Panc1 (cell line): ENCODE measurements at regions of chr14 and their contacts with region 1.

Region 1: DNA sequence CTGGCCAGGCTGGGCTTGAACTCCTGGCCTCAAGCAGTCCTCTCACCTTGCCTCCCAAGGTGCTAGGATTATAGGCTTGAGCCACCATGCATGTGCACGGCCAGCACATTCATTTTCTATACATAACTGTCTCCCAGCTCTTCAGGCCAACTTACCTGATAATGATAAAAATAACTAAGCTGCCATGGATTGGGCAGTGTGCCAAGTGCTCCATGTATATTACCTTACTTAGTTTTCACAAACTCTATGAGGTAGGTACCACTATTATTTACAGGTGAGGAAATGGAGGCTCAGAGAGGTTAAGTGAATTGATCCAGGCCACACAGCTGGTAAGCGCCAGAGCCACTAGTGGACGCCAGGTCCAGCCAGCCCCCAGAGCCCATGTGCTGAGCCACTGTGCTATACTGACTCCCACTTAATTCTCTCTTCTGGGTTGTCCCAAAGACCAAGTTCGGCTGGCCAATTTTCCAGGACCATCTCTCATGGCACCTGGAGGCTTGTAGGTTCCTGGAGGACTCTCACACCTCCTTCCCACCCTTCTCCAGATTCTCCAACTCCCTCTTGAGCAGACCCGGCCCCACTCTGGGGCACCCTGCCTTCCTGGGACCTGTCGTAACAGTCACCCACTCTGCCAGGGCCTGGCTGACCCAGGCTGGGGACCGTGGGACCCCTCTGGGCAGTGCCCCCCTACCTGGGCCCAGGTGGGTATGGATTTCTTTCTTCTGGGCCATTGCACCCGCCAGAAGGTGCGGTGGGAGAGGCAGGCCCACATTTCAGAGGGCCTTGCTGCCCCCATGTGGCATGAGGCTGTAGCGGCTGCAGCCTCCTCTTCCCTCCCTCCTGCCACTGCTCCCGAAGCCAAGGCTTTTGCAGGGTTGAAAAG is 30.2 kb upstream of the CIPC start:
- DNase-seq: peak; percentile 22
- ATAC-seq: peak; percentile 91
- H3K4me3 ChIP-seq: no peak overlapping the region
- H3K27ac ChIP-seq: peak overlapping the region; percentile 91
- H3K4me1 ChIP-seq: peaks cover 47% of the 10 kb centered on the region
- H3K27me3 ChIP-seq: no peaks in the 10 kb centered on the region
- CTCF ChIP-seq: peak; percentile 87

Region 2: GRCh38 chr14:76710056-76711010 is 357.5 kb before region 1 on chr14:
- CTCF ChIA-PET with region 1: interaction called, 10 read pairs
- POLR2A ChIA-PET with region 1: no interaction called
- in situ Hi-C with region 1: no loop called
- intact Hi-C with region 1: no loop called
- DNase-seq: no peak
- ATAC-seq: peak; percentile 78
- H3K4me3 ChIP-seq: no peak overlapping the region
- H3K27ac ChIP-seq: no peak overlapping the region
- H3K4me1 ChIP-seq: no peaks in the 10 kb centered on the region
- H3K27me3 ChIP-seq: no peaks in the 10 kb centered on the region
- CTCF ChIP-seq: peak; percentile 80

Region 3: GRCh38 chr14:76918751-76919543 is 148.9 kb before region 1 on chr14:
- CTCF ChIA-PET with region 1: interaction called, 11 read pairs
- POLR2A ChIA-PET with region 1: no interaction called
- in situ Hi-C with region 1: no loop called
- intact Hi-C with region 1: no loop called
- DNase-seq: peak; percentile 74
- ATAC-seq: peak; percentile 85
- H3K4me3 ChIP-seq: 0 out of 4 replicates have a peak overlapping the region, but pooled peaks of 1 of the 2 experiments have one; percentile 8
- H3K27ac ChIP-seq: peak overlapping the region; percentile 99
- H3K4me1 ChIP-seq: peaks cover 72% of the 10 kb centered on the region
- H3K27me3 ChIP-seq: no peaks in the 10 kb centered on the region
- CTCF ChIP-seq: no peak

Region 4: DNA sequence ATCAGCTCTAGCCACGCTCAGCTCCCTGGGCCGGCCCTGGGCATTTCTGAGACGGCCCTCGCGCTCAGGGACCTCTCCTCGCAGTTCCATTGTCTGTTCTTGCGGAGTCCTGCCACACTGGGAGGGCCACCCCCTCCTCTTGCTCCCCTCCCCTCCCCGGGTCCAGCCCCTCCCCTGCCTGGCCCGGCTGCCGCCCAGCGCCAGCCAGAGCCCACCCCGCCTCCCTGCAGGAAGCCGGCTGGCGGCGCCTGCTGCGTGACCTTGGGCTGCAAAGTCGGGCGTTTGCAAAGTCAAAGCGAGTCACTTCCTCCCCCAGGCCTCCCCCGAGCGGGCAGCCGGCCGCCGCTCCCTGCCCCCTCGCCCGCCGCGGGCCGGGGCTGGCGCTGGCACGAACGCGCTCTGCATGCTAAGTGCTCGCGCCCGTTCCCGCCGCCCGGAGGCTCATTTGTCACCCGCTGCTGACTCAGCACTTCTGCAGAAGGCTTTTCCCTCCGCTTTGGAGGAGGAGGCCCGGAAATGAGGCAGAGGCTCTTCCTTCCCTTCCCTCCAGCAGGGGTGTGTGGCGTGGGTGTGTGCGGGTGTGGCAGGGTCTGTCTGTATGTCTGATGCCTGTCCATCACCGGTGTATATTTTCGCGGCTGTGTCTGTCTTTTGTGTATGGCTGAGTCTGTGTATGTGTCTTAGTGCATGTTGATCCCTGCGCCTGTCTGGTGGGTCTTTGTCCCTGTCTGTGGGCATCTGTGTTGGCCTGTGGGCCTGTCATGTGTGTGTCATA is 111.4 kb before region 1 on chr14:
- CTCF ChIA-PET with region 1: no interaction called
- POLR2A ChIA-PET with region 1: no interaction called
- in situ Hi-C with region 1: no loop called
- intact Hi-C with region 1: loop called (anchors 5 kb)
- DNase-seq: no peak
- ATAC-seq: peak; percentile 74
- H3K4me3 ChIP-seq: peak overlapping the region; percentile 5 to 29; a peak in 3 of 4 replicates
- H3K27ac ChIP-seq: peak overlapping the region; percentile 98
- H3K4me1 ChIP-seq: peaks cover 70% of the 10 kb centered on the region
- H3K27me3 ChIP-seq: no peaks in the 10 kb centered on the region
- CTCF ChIP-seq: no peak

Region 5: GRCh38 chr14:77028384-77029231 is 39.3 kb before region 1 on chr14 and contains the start of gene IRF2BPL:
- CTCF ChIA-PET with region 1: interaction called, 10 read pairs
- POLR2A ChIA-PET with region 1: no interaction called
- in situ Hi-C with region 1: no loop called
- intact Hi-C with region 1: loop called (anchors 2 kb)
- DNase-seq: no peak
- ATAC-seq: peak; percentile 71
- H3K4me3 ChIP-seq: peak within 1 kb of the TSS; percentile 58 to 78
- H3K27ac ChIP-seq: peak within 1 kb of the TSS; percentile 99
- H3K4me1 ChIP-seq: peaks cover 43% of the 10 kb centered on the region
- H3K27me3 ChIP-seq: no peaks in the 10 kb centered on the region
- CTCF ChIP-seq: no peak
- total RNA-seq, gene IRF2BPL: 83.3 TPM

Region 6: GRCh38 chr14:77124345-77125280 is 56.7 kb after region 1 on chr14:
- CTCF ChIA-PET with region 1: no interaction called
- POLR2A ChIA-PET with region 1: no interaction called
- in situ Hi-C with region 1: no loop called
- intact Hi-C with region 1: no loop called
- DNase-seq: no peak
- ATAC-seq: peak; percentile 89
- H3K4me3 ChIP-seq: peak overlapping the region; percentile 39 to 55
- H3K27ac ChIP-seq: no peak overlapping the region
- H3K4me1 ChIP-seq: no peaks in the 10 kb centered on the region
- H3K27me3 ChIP-seq: no peaks in the 10 kb centered on the region; the same call in 1 of the 2 replicates
- CTCF ChIP-seq: peak; percentile 94

Region 7: GRCh38 chr14:77151918-77152588 is 84.2 kb after region 1 on chr14:
- CTCF ChIA-PET with region 1: no interaction called
- POLR2A ChIA-PET with region 1: no interaction called
- in situ Hi-C with region 1: no loop called
- intact Hi-C with region 1: no loop called
- DNase-seq: peak; percentile 24
- ATAC-seq: peak; percentile 83
- H3K4me3 ChIP-seq: no peak overlapping the region
- H3K27ac ChIP-seq: no peak overlapping the region
- H3K4me1 ChIP-seq: no peaks in the 10 kb centered on the region
- H3K27me3 ChIP-seq: peaks cover 3% of the 10 kb centered on the region; the same call in 1 of the 2 replicates
- CTCF ChIP-seq: no peak; the same call in 1 of the 2 replicates